ENCODE measurements at regions of chr4 and their contacts with region 1.

Region 1: GRCh38 chr4:117610706-117611283 is 423.5 kb upstream of the NDST3 start:
- DNase-seq: no peak

Region 2: GRCh38 chr4:117783716-117784115 is 172.9 kb after region 1 on chr4:
- intact Hi-C with region 1: loop called in 1 of 2 experiments (anchors 5 kb)
- DNase-seq: no peak

Measured in posterior vena cava (tissue), 2 donors.